ENCODE measurements at regions of chr15 and their contacts with region 1.

Region 1: GRCh38 chr15:68795298-68795848 is 25.3 kb downstream of the ANP32A start:
- DNase-seq: peak; percentile 93
- H3K4me3 Mint-ChIP-seq: peak overlapping the region; percentile 51
- H3K27ac Mint-ChIP-seq: peak overlapping the region; percentile 60
- H3K4me1 Mint-ChIP-seq: peaks cover 32% of the 10 kb centered on the region
- H3K27me3 Mint-ChIP-seq: no peaks in the 10 kb centered on the region
- CTCF ChIP-seq: no peak

Region 2: GRCh38 chr15:68783226-68784058 is 11.9 kb before region 1 on chr15:
- CTCF ChIA-PET with region 1: interaction called, 4 read pairs
- POLR2A ChIA-PET with region 1: interaction called, 16 read pairs
- intact Hi-C with region 1: no loop called
- DNase-seq: peak; percentile 46
- H3K4me3 Mint-ChIP-seq: no peak overlapping the region
- H3K27ac Mint-ChIP-seq: no peak overlapping the region
- H3K4me1 Mint-ChIP-seq: no peaks in the 10 kb centered on the region
- H3K27me3 Mint-ChIP-seq: no peaks in the 10 kb centered on the region
- CTCF ChIP-seq: peak; percentile 51

Region 3: DNA sequence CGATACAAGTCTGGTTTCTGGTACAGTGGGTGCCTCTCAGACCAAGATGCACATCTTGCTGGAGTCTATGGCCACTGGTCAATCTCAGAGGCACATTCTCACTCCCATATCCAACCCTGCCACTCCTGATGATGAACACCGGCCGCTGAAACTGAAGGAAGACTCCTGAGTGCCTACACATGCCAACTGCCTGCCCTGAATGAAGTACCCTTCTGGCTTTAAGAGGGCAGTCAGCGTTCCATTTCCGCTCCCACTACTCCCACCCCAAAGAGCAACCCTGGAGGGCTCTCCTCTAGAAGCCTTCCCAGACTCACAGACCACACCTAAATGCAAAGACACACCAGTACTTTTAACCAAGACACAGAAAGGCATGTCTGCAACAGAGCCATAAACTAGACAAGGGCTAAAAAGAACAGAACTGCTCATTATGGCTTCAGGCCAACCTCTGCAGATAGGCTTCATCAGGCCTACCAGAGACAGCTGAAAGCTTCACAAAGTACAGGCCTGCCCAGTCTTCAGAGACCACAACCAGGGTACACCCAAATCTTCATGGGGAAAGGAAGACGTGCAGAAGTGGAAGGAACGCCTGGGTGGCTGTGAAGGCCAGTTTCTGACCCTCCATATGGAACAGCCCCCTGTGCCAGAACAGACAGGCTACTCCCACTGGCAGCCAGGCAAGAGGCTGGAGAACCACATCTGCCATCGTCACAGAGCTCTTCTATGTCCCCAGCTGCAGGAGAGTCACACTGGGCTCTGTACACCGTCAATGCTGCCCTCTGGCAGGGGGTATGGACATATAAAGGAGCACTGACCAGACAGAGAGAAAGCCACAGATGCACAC is 11.1 kb after region 1 on chr15:
- CTCF ChIA-PET with region 1: interaction called, 4 read pairs
- POLR2A ChIA-PET with region 1: interaction called, 10 read pairs
- intact Hi-C with region 1: no loop called
- DNase-seq: no peak
- H3K4me3 Mint-ChIP-seq: no peak overlapping the region
- H3K27ac Mint-ChIP-seq: peak overlapping the region; percentile 29
- H3K4me1 Mint-ChIP-seq: peaks cover 47% of the 10 kb centered on the region
- H3K27me3 Mint-ChIP-seq: no peaks in the 10 kb centered on the region
- CTCF ChIP-seq: no peak

Region 4: GRCh38 chr15:68820295-68821189 is 25.2 kb after region 1 on chr15 and contains the start of gene ANP32A:
- CTCF ChIA-PET with region 1: interaction called, 5 read pairs
- POLR2A ChIA-PET with region 1: interaction called, 95 read pairs
- intact Hi-C with region 1: loop called (anchors 2 kb)
- DNase-seq: peak; percentile 94
- H3K4me3 Mint-ChIP-seq: peak within 1 kb of the TSS; percentile 96
- H3K27ac Mint-ChIP-seq: peak within 1 kb of the TSS; percentile 96
- H3K4me1 Mint-ChIP-seq: peaks cover 26% of the 10 kb centered on the region
- H3K27me3 Mint-ChIP-seq: no peaks in the 10 kb centered on the region
- CTCF ChIP-seq: no peak
- total RNA-seq, gene ANP32A: 150 and 159 TPM in 2 replicates